GM13976 (cell line): ENCODE measurements at regions of chr15 and their contacts with region 1.

Region 1: DNA sequence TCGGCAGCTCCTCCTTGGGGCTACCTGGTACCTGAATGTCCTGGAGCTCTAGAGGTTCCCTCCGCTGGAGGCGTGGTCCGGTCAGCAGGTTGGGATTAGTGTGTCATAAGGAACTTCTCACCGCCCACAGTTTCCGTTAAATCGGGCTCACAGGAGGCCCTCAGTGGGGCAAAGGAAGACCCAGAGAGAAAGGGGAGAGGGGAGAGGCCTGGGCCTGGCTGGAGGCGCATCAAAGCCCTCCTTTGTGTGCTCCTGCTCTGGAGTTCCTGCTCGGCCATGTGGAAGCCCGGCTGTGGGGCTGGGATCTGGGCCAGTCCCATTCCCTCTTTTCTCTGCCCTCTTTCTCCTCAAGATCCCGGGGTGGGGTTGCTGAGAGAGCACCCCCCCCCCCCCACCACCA is at the start of gene RLBP1:
- DNase-seq: no peak
- CTCF ChIP-seq: no peak

Region 2: GRCh38 chr15:88859550-88859949 is 362.0 kb before region 1 on chr15:
- in situ Hi-C with region 1: no loop called
- DNase-seq: no peak
- CTCF ChIP-seq: no peak

Region 3: GRCh38 chr15:88878720-88879184 is 342.8 kb before region 1 on chr15:
- in situ Hi-C with region 1: no loop called
- DNase-seq: peak; percentile 81
- CTCF ChIP-seq: peak; percentile 55

Region 4: GRCh38 chr15:89282631-89283030 is 61.1 kb after region 1 on chr15:
- in situ Hi-C with region 1: loop called (anchors 10 kb)
- DNase-seq: no peak
- CTCF ChIP-seq: no peak